ENCODE measurements at regions of chr5 and their contacts with region 1.

Region 1: DNA sequence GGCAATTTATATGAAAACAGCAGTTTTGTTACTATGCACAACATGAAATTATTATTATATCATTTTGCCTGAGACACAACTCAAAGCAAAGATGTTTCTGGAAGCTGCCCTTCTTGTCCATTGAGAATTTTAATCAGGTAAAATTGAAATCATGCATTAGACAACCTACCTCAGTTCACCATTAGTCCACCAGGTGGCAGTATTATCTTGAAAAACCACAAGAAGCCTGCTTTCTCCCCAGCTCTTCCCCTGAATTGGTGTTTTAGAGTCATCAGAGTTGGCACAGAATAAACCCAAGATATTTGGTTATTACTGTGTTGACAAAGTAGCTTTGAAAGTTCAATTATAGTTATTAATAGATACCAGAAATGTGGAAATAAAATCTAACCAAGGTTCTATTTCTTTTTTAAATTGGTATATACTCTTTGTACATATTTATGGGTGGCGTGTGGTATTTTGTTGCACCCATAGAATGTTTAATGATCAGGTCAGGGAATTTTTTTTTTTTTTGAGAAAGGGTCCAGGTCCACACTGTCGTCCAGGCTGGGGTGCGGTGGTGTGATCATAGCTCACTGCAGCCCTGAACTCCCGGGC is 25.7 kb downstream of the UTP15 start:
- DNase-seq: peak in 2 of 4 donors; percentile 62 to 81
- ATAC-seq: peak; percentile 96
- H3K4me3 ChIP-seq: no peak overlapping the region
- H3K27ac ChIP-seq: no peak overlapping the region
- H3K4me1 ChIP-seq: no peaks in the 10 kb centered on the region
- H3K27me3 ChIP-seq: no peaks in the 10 kb centered on the region
- CTCF ChIP-seq: peak; percentile 75 to 84

Region 2: DNA sequence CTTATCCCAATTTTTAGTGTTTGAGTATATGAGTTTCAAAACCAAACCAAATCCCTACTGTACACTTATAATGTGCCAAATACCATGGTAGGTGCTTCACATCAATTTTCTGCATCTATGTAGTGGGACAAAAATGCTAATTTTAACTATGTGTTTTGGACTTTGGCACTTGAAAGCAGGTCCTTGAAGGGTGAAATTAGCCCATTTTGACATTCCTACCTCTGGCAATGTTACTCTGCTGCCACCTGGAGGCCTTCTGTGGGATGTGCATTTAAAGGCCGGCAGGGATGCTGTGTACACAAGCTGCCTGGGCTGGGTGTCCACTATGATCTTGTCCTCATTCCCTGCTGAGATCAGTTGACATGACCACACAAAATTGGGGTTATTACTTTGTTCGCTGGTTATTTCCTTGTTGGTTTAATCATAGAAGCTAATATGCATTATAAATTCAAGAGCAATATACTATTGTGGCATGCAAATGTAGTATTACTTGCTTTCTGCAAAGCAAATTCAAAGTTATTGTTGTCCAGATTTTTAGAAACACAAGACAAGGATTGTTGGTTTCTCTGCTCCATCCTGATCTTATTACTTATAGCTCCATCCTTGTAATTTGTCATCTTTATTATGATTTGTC is 201.6 kb after region 1 on chr5:
- intact Hi-C with region 1: loop called (anchors 2 to 10 kb)
- DNase-seq: peak in 3 of 4 donors; percentile 61 to 77 (median 64)
- ATAC-seq: peak; percentile 97
- H3K4me3 ChIP-seq: no peak overlapping the region
- H3K27ac ChIP-seq: no peak overlapping the region
- H3K4me1 ChIP-seq: peaks cover 7 to 12% of the 10 kb centered on the region in 2 donors
- H3K27me3 ChIP-seq: no peaks in the 10 kb centered on the region
- CTCF ChIP-seq: peak; percentile 91 to 95

Measured in left lung (tissue), 14 donors.